ENCODE measurements at regions of chr3 and their contacts with region 1.

Region 1: GRCh38 chr3:169668957-169669681 is 5.6 kb upstream of the MECOM start:
- DNase-seq: peak; percentile 56
- H3K4me3 Mint-ChIP-seq: peak overlapping the region; percentile 50
- H3K27ac Mint-ChIP-seq: no peak overlapping the region
- H3K4me1 Mint-ChIP-seq: peaks cover 18% of the 10 kb centered on the region
- H3K27me3 Mint-ChIP-seq: peaks cover 92% of the 10 kb centered on the region

Region 2: GRCh38 chr3:168865022-168865551 is 804.0 kb before region 1 on chr3:
- CTCF ChIA-PET with region 1: interaction called, 12 read pairs
- DNase-seq: no peak
- H3K4me3 Mint-ChIP-seq: no peak overlapping the region
- H3K27ac Mint-ChIP-seq: no peak overlapping the region
- H3K4me1 Mint-ChIP-seq: no peaks in the 10 kb centered on the region
- H3K27me3 Mint-ChIP-seq: no peaks in the 10 kb centered on the region

Region 3: DNA sequence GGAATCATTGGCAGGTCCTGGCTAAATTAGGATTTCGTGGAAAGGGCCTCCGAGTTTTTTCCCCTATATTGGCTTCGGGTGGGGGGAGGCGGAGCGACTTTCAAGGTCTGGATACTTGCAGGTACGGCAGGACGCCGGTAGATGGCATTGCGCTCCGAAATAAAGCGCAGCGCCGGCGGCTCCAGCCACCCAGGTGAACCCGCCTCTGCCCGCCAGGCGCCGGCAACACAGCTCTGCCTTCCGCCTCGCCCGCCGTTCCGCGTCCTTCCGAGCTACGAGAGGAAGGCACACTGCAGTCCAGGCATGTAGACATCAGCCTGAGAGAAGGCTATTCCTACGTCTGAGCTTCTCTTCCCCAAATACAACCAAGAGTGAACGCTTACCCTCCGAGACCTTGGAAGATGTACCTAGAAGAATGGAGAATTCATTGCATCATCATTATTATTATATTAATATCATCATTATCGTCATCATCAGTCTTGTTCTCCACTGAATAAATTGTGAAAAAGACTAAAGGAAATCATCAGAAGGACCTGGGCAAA is 519.7 kb before region 1 on chr3:
- CTCF ChIA-PET with region 1: interaction called, 50 read pairs
- DNase-seq: peak; percentile 83
- H3K4me3 Mint-ChIP-seq: no peak overlapping the region
- H3K27ac Mint-ChIP-seq: no peak overlapping the region
- H3K4me1 Mint-ChIP-seq: peaks cover 23% of the 10 kb centered on the region
- H3K27me3 Mint-ChIP-seq: peaks cover 64% of the 10 kb centered on the region

Region 4: DNA sequence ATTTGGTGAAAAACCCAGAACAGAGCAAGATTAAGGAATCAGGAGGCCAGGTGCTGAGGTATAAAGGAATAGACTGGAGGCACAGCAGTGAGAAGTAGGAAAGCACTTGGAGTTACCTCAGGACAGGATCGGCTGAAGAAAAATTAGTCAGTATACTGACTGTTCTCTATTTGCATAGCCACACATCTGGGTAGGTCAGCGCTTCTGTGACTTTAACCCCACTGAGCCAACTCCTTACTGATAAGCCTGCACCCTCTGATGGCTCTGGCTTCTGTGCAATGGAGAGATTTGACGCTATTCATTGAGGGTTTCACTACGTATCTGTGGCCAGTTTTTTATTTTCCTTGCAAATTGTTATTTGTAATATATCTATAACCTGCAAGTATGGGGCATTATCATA is 28.0 kb before region 1 on chr3:
- CTCF ChIA-PET with region 1: no interaction called
- DNase-seq: no peak
- H3K4me3 Mint-ChIP-seq: no peak overlapping the region
- H3K27ac Mint-ChIP-seq: no peak overlapping the region
- H3K4me1 Mint-ChIP-seq: no peaks in the 10 kb centered on the region
- H3K27me3 Mint-ChIP-seq: peaks cover 4% of the 10 kb centered on the region

Measured in activated naive CD4-positive, alpha-beta T cell treated with anti-CD3 and anti-CD28 coated beads, Interleukin-2, amount 10 ng/mL, durations not matched to agents 7 days and 5 days (primary cell).